GM12878 (cell line): ENCODE measurements at regions of chr10 and their contacts with region 1.

Region 1: GRCh38 chr10:110993024-110993693 is 73.8 kb downstream of the SHOC2 start:
- DNase-seq: peak; percentile 13
- ATAC-seq: peak; percentile 85
- H3K4me3 ChIP-seq: no peak overlapping the region
- H3K27ac ChIP-seq: peak overlapping the region; percentile 51; the same call in 1 of the 2 replicates
- H3K4me1 ChIP-seq: peaks cover 11% of the 10 kb centered on the region
- H3K27me3 ChIP-seq: no peaks in the 10 kb centered on the region
- CTCF ChIP-seq: no peak
- EP300 ChIP-seq: no peak
- POLR2A ChIP-seq: no peak
- RAD21 ChIP-seq: no peak

Region 2: DNA sequence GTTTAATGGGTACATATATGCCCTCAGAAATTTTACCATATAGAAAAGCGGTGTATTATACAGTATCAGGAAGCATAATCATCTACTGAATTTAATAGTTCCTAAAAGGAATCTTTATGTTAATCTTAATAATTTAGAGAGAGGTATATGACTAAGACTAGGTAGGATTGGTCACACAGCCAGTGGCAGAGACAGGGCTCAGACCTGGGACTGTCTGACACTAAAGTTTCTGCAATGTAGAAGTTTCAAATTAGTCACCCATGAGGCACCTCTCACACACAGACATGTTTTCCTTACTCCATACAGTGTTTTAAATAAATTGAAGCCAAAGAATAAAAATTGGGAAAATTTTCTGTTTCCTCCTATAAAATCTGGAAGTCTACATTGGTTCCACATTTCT is 10.9 kb after region 1 on chr10:
- CTCF ChIA-PET with region 1: interaction called, 5 read pairs
- POLR2A ChIA-PET with region 1: interaction called, 3 read pairs
- RAD21 ChIA-PET with region 1: no interaction called
- SMC1A ChIA-PET with region 1: interaction called, 15 read pairs
- in situ Hi-C with region 1: no loop called
- intact Hi-C with region 1: no loop called
- DNase-seq: no peak
- ATAC-seq: no peak
- H3K4me3 ChIP-seq: no peak overlapping the region
- H3K27ac ChIP-seq: no peak overlapping the region
- H3K4me1 ChIP-seq: no peaks in the 10 kb centered on the region
- H3K27me3 ChIP-seq: no peaks in the 10 kb centered on the region
- CTCF ChIP-seq: no peak
- EP300 ChIP-seq: no peak
- POLR2A ChIP-seq: no peak
- RAD21 ChIP-seq: no peak